Heart left ventricle (tissue), 16 donors: ENCODE measurements at regions of chr2 and their contacts with region 1.

Region 1: GRCh38 chr2:158753641-158754611 is 41.2 kb upstream of the DAPL1 start:
- DNase-seq: peak in 3 of 5 donors; percentile 45 to 52 (median 47)
- ATAC-seq: peak; percentile 77 to 94 (median 86)
- H3K4me3 ChIP-seq: peak overlapping the region in 11 of 12 donors; percentile 7 to 52 (median 31)
- H3K27ac ChIP-seq: peak overlapping the region in 4 of 12 donors; percentile 0 to 56 (median 18)
- H3K4me1 ChIP-seq: peaks cover 0 to 12% (median 8%) of the 10 kb centered on the region in 12 donors
- H3K27me3 ChIP-seq: no peaks in the 10 kb centered on the region
- CTCF ChIP-seq: peak; percentile 81 to 96 (median 90)
- POLR2A ChIP-seq: no peak

Region 2: GRCh38 chr2:157497638-157498314 is 1256.2 kb before region 1 on chr2:
- intact Hi-C with region 1: loop called in 1 of 10 experiments (anchors 5 kb)
- DNase-seq: no peak
- ATAC-seq: peak in 3 of 4 donors; percentile 57 to 72 (median 71)
- H3K4me3 ChIP-seq: no peak overlapping the region
- H3K27ac ChIP-seq: no peak overlapping the region
- H3K4me1 ChIP-seq: no peaks in the 10 kb centered on the region
- H3K27me3 ChIP-seq: no peaks in the 10 kb centered on the region
- CTCF ChIP-seq: peak; percentile 43 to 65 (median 57)
- POLR2A ChIP-seq: no peak

Region 3: GRCh38 chr2:158024288-158024898 is 729.5 kb before region 1 on chr2:
- intact Hi-C with region 1: loop called in 5 of 10 experiments (anchors 2 to 10 kb)
- DNase-seq: peak in 3 of 5 donors; percentile 19 to 43 (median 39)
- ATAC-seq: peak in 2 of 4 donors; percentile 45 to 62
- H3K4me3 ChIP-seq: no peak overlapping the region
- H3K27ac ChIP-seq: no peak overlapping the region
- H3K4me1 ChIP-seq: no peaks in the 10 kb centered on the region
- H3K27me3 ChIP-seq: no peaks in the 10 kb centered on the region
- CTCF ChIP-seq: peak; percentile 74 to 92 (median 84)
- POLR2A ChIP-seq: no peak

Region 4: GRCh38 chr2:158034199-158034866 is 719.6 kb before region 1 on chr2:
- intact Hi-C with region 1: loop called in 6 of 10 experiments (anchors 5 to 10 kb)
- DNase-seq: peak in 2 of 5 donors; percentile 19 to 29
- ATAC-seq: peak in 3 of 4 donors; percentile 73 to 79 (median 77)
- H3K4me3 ChIP-seq: no peak overlapping the region
- H3K27ac ChIP-seq: no peak overlapping the region
- H3K4me1 ChIP-seq: peaks cover 0 to 5% (median 0%) of the 10 kb centered on the region in 12 donors
- H3K27me3 ChIP-seq: no peaks in the 10 kb centered on the region
- CTCF ChIP-seq: peak; percentile 32 to 63 (median 42)
- POLR2A ChIP-seq: no peak

Region 5: DNA sequence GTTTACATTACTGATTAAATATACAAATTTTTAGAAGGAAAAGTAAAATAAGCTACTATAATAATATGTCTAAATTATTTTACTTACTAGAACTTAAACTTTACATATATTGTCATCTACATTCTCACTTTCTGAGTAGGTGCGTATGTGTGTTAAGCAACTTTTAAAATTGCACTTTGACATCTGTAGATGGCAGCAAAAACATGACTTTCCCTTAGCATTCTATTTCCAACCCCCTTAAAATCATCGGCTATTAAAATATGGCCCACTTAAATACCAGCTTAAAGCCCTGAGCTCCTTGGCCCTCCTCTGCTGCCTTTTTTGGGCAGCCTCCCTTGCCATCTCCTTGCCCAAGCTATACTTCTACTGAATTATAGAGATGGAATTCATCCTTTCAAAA is 574.3 kb before region 1 on chr2:
- intact Hi-C with region 1: loop called (anchors 1 to 5 kb)
- DNase-seq: no peak
- ATAC-seq: peak in 2 of 4 donors; percentile 27 to 60
- H3K4me3 ChIP-seq: no peak overlapping the region
- H3K27ac ChIP-seq: no peak overlapping the region
- H3K4me1 ChIP-seq: peaks cover 0 to 7% (median 0%) of the 10 kb centered on the region in 12 donors
- H3K27me3 ChIP-seq: no peaks in the 10 kb centered on the region
- CTCF ChIP-seq: peak in 11 of 12 donors; percentile 21 to 67 (median 44)
- POLR2A ChIP-seq: no peak

Region 6: DNA sequence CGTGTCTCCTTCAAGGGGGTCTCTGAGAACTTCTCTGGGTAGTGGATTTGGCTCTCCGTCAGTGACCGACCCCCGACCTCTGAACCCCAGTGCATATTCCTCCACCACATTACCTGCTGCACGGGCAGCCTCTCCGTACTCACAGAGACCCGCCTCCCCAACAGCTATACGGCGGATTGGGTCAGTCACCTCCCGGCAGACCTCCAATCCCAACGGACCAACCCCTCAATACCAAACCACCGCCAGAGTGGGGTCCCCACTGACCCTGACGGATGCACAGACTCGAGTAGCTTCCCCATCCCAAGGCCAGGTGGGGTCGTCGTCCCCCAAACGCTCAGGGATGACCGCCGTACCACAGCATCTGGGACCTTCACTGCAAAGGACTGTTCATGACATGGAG is 129.0 kb before region 1 on chr2:
- intact Hi-C with region 1: loop called in 1 of 10 experiments (anchors 10 kb)
- DNase-seq: peak in 1 of 5 donors; percentile 54
- ATAC-seq: no peak
- H3K4me3 ChIP-seq: no peak overlapping the region
- H3K27ac ChIP-seq: no peak overlapping the region
- H3K4me1 ChIP-seq: peaks cover 0 to 10% (median 0%) of the 10 kb centered on the region in 12 donors
- H3K27me3 ChIP-seq: no peaks in the 10 kb centered on the region
- CTCF ChIP-seq: no peak
- POLR2A ChIP-seq: no peak

Region 7: GRCh38 chr2:158667586-158667985 is 86.3 kb before region 1 on chr2:
- intact Hi-C with region 1: loop called in 5 of 10 experiments (anchors 10 kb)
- DNase-seq: no peak
- ATAC-seq: peak in 3 of 4 donors; percentile 50 to 68 (median 55)
- H3K4me3 ChIP-seq: no peak overlapping the region
- H3K27ac ChIP-seq: peak overlapping the region in 11 of 12 donors; percentile 10 to 76 (median 57)
- H3K4me1 ChIP-seq: peaks cover 4 to 66% (median 38%) of the 10 kb centered on the region in 12 donors
- H3K27me3 ChIP-seq: no peaks in the 10 kb centered on the region
- CTCF ChIP-seq: no peak
- POLR2A ChIP-seq: no peak

Region 8: DNA sequence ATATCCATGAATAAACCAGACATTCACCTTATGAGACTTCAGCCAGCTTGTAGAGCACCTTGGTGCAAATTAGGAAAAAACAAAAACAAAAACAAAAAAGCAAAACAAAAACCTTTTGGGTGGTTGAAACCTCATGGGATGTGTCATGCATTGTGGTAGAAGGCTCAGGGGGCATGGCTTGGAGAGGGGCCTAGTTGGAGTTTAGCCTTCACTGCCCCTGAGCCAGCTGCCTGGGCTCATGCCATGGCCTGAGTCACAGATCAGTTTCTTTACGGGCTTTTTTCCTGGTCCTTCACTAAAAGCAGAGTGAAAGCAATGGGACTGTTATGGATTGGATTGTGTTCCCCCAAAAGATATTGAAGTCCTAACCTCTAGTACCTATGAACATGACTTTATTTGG is 19.2 kb after region 1 on chr2:
- intact Hi-C with region 1: no loop called
- DNase-seq: no peak
- ATAC-seq: no peak
- H3K4me3 ChIP-seq: no peak overlapping the region
- H3K27ac ChIP-seq: no peak overlapping the region
- H3K4me1 ChIP-seq: no peaks in the 10 kb centered on the region
- H3K27me3 ChIP-seq: no peaks in the 10 kb centered on the region
- CTCF ChIP-seq: no peak
- POLR2A ChIP-seq: no peak